ENCODE measurements at regions of chr2 and their contacts with region 1.

Region 1: GRCh38 chr2:88669371-88670214 is 21.9 kb upstream of the RPIA start:
- DNase-seq: peak; percentile 57
- CTCF ChIP-seq: peak; percentile 82

Region 2: DNA sequence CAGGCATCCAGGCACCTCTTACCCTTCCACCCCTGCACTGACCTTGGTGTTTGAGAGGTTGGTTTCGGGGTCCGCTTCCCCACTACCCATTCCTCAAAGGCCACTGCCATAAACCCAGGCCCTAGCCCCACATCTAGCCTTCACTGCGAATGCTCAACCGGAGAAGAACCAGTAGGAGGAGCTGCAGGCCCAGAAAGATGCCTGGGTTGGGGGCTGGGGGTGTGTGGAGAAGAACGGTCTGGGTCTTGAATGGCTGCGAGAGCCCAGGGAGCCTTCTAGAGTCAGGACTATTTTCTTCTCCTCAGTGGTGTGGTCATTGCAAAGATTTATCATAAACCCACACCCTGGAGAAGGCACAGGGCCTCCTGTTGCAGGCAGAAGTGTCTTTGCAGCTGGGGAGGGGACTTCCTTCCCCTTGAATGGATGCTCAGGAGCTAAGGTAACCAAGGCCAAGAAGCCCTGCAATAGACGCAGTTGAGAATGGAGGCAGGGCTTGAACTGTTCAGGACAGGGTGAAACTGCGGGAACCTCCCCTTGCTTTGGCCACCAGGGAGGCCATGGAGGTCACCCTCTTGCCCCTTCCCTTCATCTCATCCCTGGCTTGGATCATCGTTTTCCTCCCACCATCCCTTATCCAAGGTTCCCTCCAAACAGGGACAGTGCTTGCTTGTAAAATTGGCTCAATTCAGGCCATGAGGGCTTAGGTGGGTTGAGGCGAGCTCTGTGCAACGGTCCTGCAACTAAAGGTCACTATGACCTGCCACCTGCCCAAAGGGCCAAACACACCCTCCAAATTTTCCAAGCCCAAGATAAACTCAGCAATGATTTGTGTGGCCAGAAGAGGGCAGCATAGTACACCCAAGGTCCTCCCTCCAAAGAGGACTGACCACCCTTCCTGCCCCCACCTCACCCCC is 478.5 kb before region 1 on chr2:
- CTCF ChIA-PET with region 1: interaction called, 10 read pairs
- POLR2A ChIA-PET with region 1: no interaction called
- DNase-seq: peak; percentile 70
- CTCF ChIP-seq: peak; percentile 67

Region 3: DNA sequence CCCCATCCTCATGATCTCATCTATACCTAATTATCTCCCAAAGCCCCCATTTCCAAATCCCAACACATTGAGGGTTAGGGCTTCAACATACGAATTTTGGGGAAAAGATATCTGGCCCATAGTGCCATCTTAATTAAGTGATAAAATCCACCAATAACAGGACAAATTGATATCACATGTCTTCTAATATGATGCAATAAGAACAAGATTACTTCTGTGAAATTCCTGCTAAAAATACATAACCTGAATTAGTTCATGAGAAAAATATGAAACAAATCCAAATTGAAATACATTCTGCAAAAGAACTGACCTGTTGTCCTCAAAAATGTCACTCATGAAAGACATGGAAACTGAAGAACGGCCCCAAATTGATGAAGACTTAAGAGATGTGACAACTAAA is 245.9 kb before region 1 on chr2:
- CTCF ChIA-PET with region 1: no interaction called
- POLR2A ChIA-PET with region 1: no interaction called
- DNase-seq: no peak
- CTCF ChIP-seq: no peak

Region 4: GRCh38 chr2:88517759-88518201 is 151.8 kb before region 1 on chr2:
- CTCF ChIA-PET with region 1: no interaction called
- POLR2A ChIA-PET with region 1: no interaction called
- DNase-seq: no peak
- CTCF ChIP-seq: no peak

Region 5: DNA sequence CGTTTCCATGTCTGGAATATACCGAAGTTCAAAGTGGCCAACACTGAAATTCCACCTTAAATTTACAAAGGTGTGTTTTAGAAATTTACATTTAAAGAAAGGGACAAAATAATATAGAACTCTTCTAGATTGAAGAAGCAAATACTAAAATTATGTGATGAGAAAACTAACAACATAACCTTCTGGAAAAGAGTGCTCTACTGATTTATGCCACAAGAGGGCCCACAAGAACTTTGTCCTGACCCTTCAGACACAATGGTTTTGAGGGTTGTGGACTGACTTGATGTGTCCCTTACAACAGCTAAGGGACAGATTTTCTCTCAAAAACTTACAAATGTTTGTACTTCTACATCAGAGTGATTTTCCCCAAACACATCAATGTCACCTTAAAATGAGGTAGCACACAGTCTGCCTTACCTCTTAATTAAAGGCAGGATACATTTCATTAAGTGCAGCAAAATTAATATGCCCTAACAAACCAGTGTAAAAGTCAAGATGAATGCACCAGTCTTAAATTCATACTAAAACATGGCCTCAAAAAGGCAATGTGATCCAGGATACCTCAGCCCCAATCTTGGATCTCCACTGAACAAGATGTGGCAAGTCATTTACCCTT is 78.5 kb before region 1 on chr2:
- CTCF ChIA-PET with region 1: interaction called, 155 read pairs
- POLR2A ChIA-PET with region 1: no interaction called
- DNase-seq: peak; percentile 48
- CTCF ChIP-seq: peak; percentile 67

Region 6: DNA sequence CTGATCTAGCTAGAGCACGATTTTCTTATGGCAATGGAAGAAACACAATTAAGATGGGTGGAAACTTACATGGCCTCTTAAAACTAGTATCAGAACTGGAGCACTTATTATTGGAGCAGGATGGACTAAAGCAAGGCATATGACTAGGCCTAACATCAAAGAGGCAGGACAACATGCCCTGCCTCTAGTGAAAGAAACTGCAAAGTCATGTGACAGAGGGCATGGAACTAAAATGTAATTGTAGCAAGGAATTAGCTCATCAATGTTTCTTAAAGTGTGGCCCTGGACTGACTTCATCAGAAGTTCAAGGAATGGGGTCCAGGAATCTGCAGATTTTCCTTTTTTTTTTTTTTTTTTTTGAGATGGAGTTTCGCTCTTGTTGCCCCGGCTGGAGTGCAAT is 37.0 kb before region 1 on chr2:
- CTCF ChIA-PET with region 1: interaction called, 16 read pairs
- POLR2A ChIA-PET with region 1: interaction called, 3 read pairs
- DNase-seq: no peak
- CTCF ChIP-seq: no peak

Region 7: GRCh38 chr2:88651660-88652059 is 17.9 kb before region 1 on chr2:
- CTCF ChIA-PET with region 1: interaction called, 184 read pairs
- POLR2A ChIA-PET with region 1: no interaction called
- DNase-seq: no peak
- CTCF ChIP-seq: no peak

Region 8: GRCh38 chr2:88680266-88680902 is 10.8 kb after region 1 on chr2:
- CTCF ChIA-PET with region 1: interaction called, 184 read pairs
- POLR2A ChIA-PET with region 1: no interaction called
- DNase-seq: no peak
- CTCF ChIP-seq: no peak

Region 9: DNA sequence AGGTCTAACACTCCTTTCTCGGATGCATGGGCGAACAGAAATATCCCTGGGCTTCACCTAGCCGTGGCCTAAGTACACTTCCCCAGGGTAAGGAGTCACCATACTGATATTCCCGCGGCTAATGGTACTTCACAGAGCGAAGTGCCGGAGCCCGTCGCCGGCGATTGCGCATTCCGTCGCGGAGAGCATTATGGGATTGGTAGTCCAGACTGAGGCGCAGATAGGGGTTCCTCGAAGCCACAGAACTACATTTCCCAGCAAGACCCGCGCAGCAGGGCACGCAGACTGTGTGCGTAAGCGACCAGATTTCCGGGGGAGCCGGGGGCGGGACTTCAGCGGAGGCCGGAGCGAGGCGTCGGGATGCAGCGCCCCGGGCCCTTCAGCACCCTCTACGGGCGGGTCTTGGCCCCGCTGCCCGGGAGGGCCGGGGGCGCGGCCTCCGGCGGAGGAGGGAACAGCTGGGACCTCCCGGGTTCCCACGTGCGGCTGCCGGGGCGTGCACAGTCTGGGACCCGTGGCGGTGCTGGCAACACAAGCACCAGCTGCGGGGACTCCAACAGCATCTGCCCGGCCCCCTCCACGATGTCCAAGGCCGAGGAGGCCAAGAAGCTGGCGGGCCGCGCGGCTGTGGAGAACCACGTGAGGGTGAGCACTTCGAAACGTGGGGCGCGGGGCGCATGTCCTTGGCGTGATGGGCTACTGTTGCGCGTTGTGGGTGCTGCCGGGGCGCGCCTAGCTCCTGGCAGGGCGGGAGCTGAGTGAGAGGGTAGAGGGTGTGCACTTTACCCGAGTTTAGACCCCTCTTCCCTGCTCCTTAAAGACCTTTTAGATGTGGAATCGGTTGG is 22.0 kb after region 1 on chr2 and contains the start of gene RPIA:
- CTCF ChIA-PET with region 1: interaction called, 43 read pairs
- POLR2A ChIA-PET with region 1: no interaction called
- DNase-seq: peak; percentile 98
- CTCF ChIP-seq: peak; percentile 75